Heart right ventricle (tissue), 16 donors: ENCODE measurements at regions of chr9 and their contacts with region 1.

Region 1: GRCh38 chr9:123349691-123350480 is 6.1 kb upstream of the CRB2 start:
- DNase-seq: peak in 1 of 2 donors; percentile 56
- ATAC-seq: peak; percentile 67 to 83 (median 76)
- H3K4me3 ChIP-seq: no peak overlapping the region
- H3K27ac ChIP-seq: no peak overlapping the region
- H3K4me1 ChIP-seq: peaks cover 0 to 10% (median 0%) of the 10 kb centered on the region in 9 donors
- H3K27me3 ChIP-seq: peaks cover 0 to 26% (median 17%) of the 10 kb centered on the region in 7 donors
- CTCF ChIP-seq: peak; percentile 88 to 98 (median 94)

Region 2: GRCh38 chr9:123002754-123003153 is 347.1 kb before region 1 on chr9:
- intact Hi-C with region 1: loop called in 1 of 10 experiments (anchors 10 kb)
- DNase-seq: no peak
- ATAC-seq: peak in 1 of 8 donors; percentile 53
- H3K4me3 ChIP-seq: no peak overlapping the region
- H3K27ac ChIP-seq: peak overlapping the region in 8 of 10 donors; percentile 5 to 52 (median 42)
- H3K4me1 ChIP-seq: peaks cover 0 to 24% (median 11%) of the 10 kb centered on the region in 9 donors
- H3K27me3 ChIP-seq: no peaks in the 10 kb centered on the region
- CTCF ChIP-seq: no peak

Region 3: GRCh38 chr9:123091459-123091858 is 258.4 kb before region 1 on chr9:
- intact Hi-C with region 1: loop called in 3 of 10 experiments (anchors 5 to 10 kb)
- DNase-seq: no peak
- ATAC-seq: no peak
- H3K4me3 ChIP-seq: no peak overlapping the region
- H3K27ac ChIP-seq: no peak overlapping the region
- H3K4me1 ChIP-seq: peaks cover 0 to 8% (median 0%) of the 10 kb centered on the region in 9 donors
- H3K27me3 ChIP-seq: no peaks in the 10 kb centered on the region
- CTCF ChIP-seq: no peak

Region 4: DNA sequence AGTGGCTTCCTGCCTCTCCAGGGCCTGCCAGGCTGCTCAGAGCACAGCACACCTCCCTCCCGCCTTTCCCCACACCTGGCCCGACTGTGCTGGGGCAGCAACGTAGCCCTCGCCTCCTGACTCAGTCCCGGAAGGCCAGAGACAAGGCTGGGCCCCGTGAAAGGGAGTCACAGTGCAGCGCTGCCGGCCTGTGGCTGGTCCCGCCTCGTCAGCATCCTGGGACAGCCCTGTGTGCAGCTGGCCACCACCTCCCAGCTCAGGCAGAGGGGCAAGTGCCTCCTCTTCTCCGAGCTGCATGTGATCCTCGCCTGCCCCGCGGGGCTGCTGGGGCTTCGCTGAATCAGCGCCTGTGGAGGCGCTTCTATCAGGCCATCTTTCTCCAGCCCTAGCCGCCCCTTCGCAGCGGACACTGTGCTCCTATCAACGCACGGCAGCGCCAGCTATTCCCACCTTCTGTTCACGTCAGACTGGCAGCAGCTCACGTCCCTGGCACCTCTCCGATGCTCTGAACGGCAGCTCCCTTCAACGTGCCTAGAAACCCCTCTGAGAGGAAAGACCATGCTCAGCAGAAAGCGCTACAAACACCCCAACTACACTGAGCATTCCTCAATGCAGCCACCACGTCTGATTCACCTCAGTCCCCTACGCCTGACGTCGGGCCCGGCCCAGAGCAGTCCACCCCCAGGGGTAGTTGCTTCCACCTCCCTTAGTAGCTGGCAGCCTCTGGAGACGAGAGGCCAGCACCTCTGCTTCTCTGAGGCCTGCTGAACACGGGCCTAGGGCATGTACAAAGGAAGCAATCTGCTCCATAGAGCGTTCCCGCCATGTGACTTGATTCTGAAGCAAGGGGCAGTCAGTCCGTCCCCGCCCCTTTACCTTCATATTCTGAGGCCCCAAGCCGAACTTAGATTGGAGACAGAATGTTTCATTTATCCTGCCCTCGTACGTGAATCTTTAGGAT is 237.6 kb before region 1 on chr9:
- intact Hi-C with region 1: loop called in 3 of 10 experiments (anchors 5 to 10 kb)
- DNase-seq: peak in 1 of 2 donors; percentile 25
- ATAC-seq: peak in 7 of 8 donors; percentile 35 to 65 (median 46)
- H3K4me3 ChIP-seq: no peak overlapping the region
- H3K27ac ChIP-seq: peak overlapping the region in 4 of 10 donors; percentile 0 to 49 (median 14)
- H3K4me1 ChIP-seq: peaks cover 2 to 30% (median 17%) of the 10 kb centered on the region in 9 donors
- H3K27me3 ChIP-seq: no peaks in the 10 kb centered on the region
- CTCF ChIP-seq: no peak

Region 5: GRCh38 chr9:123251741-123252140 is 98.1 kb before region 1 on chr9:
- intact Hi-C with region 1: no loop called
- DNase-seq: no peak
- ATAC-seq: no peak
- H3K4me3 ChIP-seq: no peak overlapping the region
- H3K27ac ChIP-seq: no peak overlapping the region
- H3K4me1 ChIP-seq: peaks cover 0 to 12% (median 2%) of the 10 kb centered on the region in 9 donors
- H3K27me3 ChIP-seq: no peaks in the 10 kb centered on the region
- CTCF ChIP-seq: no peak

Region 6: DNA sequence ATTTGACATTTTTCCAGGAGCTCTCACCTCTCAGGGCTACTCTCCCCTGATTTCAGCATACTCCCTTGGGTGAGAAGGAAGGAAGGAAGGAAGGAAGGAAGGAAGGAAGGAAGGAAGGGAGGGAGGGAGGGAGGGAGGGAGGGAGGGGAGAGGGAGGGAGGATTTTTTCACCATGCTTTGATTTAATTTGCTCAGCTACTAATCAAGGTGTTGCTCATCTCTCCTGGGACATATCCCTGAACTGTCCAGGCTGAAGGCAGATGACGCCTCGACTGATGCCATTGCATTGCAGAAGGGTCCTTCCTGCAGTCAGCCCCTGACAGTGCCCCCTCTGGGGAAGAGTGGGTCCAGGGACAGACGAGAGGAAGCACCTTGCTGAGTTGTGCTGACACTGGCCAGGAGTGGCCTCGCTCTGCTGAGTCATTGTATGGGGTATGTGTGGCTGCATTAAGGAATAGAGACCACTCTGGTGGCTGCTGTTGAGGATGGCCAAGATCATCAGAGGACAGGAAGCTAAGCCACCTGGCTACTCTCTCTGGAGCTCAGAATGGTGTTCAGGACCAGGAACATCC is 37.5 kb before region 1 on chr9:
- intact Hi-C with region 1: no loop called
- DNase-seq: no peak
- ATAC-seq: peak in 1 of 8 donors; percentile 46
- H3K4me3 ChIP-seq: no peak overlapping the region
- H3K27ac ChIP-seq: no peak overlapping the region
- H3K4me1 ChIP-seq: peaks cover 0 to 8% (median 5%) of the 10 kb centered on the region in 9 donors
- H3K27me3 ChIP-seq: no peaks in the 10 kb centered on the region
- CTCF ChIP-seq: no peak

Region 7: DNA sequence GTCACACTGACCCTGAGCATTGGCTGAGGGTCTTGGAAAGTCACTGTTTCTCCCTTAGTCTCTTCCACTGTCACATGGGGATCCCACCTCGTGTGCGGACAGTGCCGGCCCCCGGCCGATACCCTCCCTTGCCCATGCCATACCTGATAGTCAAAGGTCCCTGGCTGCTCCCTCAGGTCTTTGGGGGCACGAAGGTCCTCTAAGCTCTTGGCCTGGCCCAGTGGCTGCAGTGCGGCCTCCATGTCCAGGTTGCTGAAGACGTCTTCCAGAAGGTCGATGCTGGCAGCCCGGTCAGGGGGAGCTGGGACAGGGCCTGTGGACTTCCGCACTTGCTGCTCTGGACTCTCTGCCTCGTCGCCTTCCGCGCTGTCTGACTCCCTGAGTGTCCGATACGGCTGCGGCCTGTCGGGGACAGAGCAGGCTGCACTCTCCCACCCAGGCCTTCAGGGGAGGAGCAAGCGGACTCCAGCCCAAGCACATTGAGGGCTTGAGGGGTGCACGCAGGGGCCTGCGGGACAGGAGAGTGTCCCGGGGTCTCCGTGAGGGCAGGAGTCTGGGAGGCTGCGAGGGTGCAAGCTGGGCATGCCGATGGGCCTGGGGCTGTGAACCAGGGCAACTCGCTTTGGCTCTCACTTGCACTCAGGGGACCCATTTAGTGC is 33.8 kb after region 1 on chr9:
- intact Hi-C with region 1: loop called in 2 of 10 experiments (anchors 1 to 2 kb)
- DNase-seq: no peak
- ATAC-seq: no peak
- H3K4me3 ChIP-seq: no peak overlapping the region
- H3K27ac ChIP-seq: no peak overlapping the region
- H3K4me1 ChIP-seq: no peaks in the 10 kb centered on the region
- H3K27me3 ChIP-seq: no peaks in the 10 kb centered on the region
- CTCF ChIP-seq: no peak